CD8-positive, alpha-beta T cell (primary cell): ENCODE measurements at regions of chr5 and their contacts with region 1.

Region 1: GRCh38 chr5:472656-473553 is 29.9 kb downstream of the EXOC3 start:
- DNase-seq: peak; percentile 75 to 94 (median 88)
- ATAC-seq: peak; percentile 91
- H3K4me3 ChIP-seq: peak overlapping the region; percentile 71 to 79
- H3K4me3 Mint-ChIP-seq: peak overlapping the region; percentile 79
- H3K27ac ChIP-seq: peak overlapping the region; percentile 66 to 84
- H3K27ac Mint-ChIP-seq: no peak overlapping the region
- H3K4me1 ChIP-seq: peaks cover 11% of the 10 kb centered on the region
- H3K4me1 Mint-ChIP-seq: peaks cover 21% of the 10 kb centered on the region
- H3K27me3 ChIP-seq: peaks cover 6 to 29% of the 10 kb centered on the region in 2 experiments
- H3K27me3 Mint-ChIP-seq: peaks cover 6% of the 10 kb centered on the region
- CTCF ChIP-seq: no peak

Region 2: DNA sequence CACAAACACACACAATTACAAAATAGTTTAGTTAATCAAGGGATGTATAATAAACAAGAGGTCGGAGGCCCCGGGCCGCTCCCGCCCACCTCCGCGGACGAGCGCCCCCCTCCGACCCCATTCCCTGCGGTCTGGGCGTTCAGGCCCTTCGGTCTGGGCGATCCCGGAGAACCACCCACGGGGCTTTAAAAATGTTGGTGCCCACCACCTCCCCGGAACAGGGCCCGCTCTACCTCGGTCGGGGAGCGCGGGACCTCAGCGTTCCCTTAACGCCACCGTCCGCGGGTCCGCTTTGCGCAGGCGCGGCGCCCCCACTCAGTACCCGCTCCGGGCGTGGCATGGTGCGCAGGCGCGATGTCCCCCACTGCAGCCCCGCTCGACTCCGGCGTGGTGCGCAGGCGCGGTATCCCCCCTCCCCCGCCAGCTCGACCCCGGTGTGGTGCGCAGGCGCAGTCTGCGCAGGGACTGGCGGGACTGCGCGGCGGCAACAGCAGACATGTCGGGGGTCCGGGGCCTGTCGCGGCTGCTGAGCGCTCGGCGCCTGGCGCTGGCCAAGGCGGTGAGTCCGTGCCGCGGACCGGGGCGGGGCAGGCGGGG is 254.9 kb before region 1 on chr5 and contains the starts of genes CCDC127 and SDHA:
- CTCF ChIA-PET with region 1: no interaction called
- POLR2A ChIA-PET with region 1: interaction called, 4 read pairs
- intact Hi-C with region 1: loop called in 1 of 2 experiments (anchors 10 kb)
- DNase-seq: peak; percentile 94 to 99 (median 99)
- ATAC-seq: peak; percentile 85
- H3K4me3 ChIP-seq: peak within 1 kb of the TSS; percentile 52 to 83
- H3K4me3 Mint-ChIP-seq: peak within 1 kb of the TSS; percentile 95
- H3K27ac ChIP-seq: peak within 1 kb of the TSS; percentile 70 to 87
- H3K27ac Mint-ChIP-seq: peak within 1 kb of the TSS; percentile 95
- H3K4me1 ChIP-seq: peaks cover 22% of the 10 kb centered on the region
- H3K4me1 Mint-ChIP-seq: peaks cover 52% of the 10 kb centered on the region
- H3K27me3 ChIP-seq: no peaks in the 10 kb centered on the region
- H3K27me3 Mint-ChIP-seq: no peaks in the 10 kb centered on the region
- CTCF ChIP-seq: peak; percentile 33
- total RNA-seq, gene CCDC127: 1.5 to 2.2 TPM
- total RNA-seq, gene SDHA: 203 to 216 TPM

Region 3: GRCh38 chr5:270340-270739 is 202.6 kb before region 1 on chr5:
- CTCF ChIA-PET with region 1: no interaction called
- POLR2A ChIA-PET with region 1: interaction called, 4 read pairs
- intact Hi-C with region 1: loop called in 1 of 2 experiments (anchors 1 kb)
- DNase-seq: peak in 2 of 9 experiments; percentile 18 to 27
- ATAC-seq: no peak
- H3K4me3 ChIP-seq: peak overlapping the region in 1 of 2 experiments; percentile 82
- H3K4me3 Mint-ChIP-seq: peak overlapping the region; percentile 85
- H3K27ac ChIP-seq: no peak overlapping the region
- H3K27ac Mint-ChIP-seq: peak overlapping the region; percentile 64
- H3K4me1 ChIP-seq: no peaks in the 10 kb centered on the region
- H3K4me1 Mint-ChIP-seq: peaks cover 37% of the 10 kb centered on the region
- H3K27me3 ChIP-seq: no peaks in the 10 kb centered on the region
- H3K27me3 Mint-ChIP-seq: no peaks in the 10 kb centered on the region
- CTCF ChIP-seq: no peak

Region 4: GRCh38 chr5:892394-893136 is 419.7 kb after region 1 on chr5 and contains the starts of genes BRD9 and TRIP13:
- CTCF ChIA-PET with region 1: no interaction called
- POLR2A ChIA-PET with region 1: no interaction called
- intact Hi-C with region 1: loop called in 1 of 2 experiments (anchors 10 kb)
- DNase-seq: peak; percentile 68 to 92 (median 81)
- ATAC-seq: peak; percentile 94
- H3K4me3 ChIP-seq: peak within 1 kb of the TSS; percentile 85 to 90
- H3K4me3 Mint-ChIP-seq: peak within 1 kb of the TSS; percentile 85
- H3K27ac ChIP-seq: peak within 1 kb of the TSS; percentile 74 to 77
- H3K27ac Mint-ChIP-seq: peak within 1 kb of the TSS; percentile 91
- H3K4me1 ChIP-seq: peaks cover 17% of the 10 kb centered on the region
- H3K4me1 Mint-ChIP-seq: peaks cover 22% of the 10 kb centered on the region
- H3K27me3 ChIP-seq: no peaks in the 10 kb centered on the region
- H3K27me3 Mint-ChIP-seq: no peaks in the 10 kb centered on the region
- CTCF ChIP-seq: no peak
- total RNA-seq, gene BRD9: 99.8 to 108 TPM
- total RNA-seq, gene TRIP13: 0.33 to 0.76 TPM